Right cardiac atrium (tissue), 5 donors: ENCODE measurements at regions of chr10 and their contacts with region 1.

Region 1: GRCh38 chr10:22356333-22356873 is 11.1 kb downstream of the SPAG6 start:
- DNase-seq: no peak
- ATAC-seq: no peak
- H3K4me3 ChIP-seq: no peak overlapping the region
- H3K27ac ChIP-seq: no peak overlapping the region
- H3K4me1 ChIP-seq: no peaks in the 10 kb centered on the region
- H3K27me3 ChIP-seq: no peaks in the 10 kb centered on the region

Region 2: GRCh38 chr10:22271786-22272185 is 84.6 kb before region 1 on chr10:
- intact Hi-C with region 1: no loop called
- DNase-seq: no peak
- ATAC-seq: no peak
- H3K4me3 ChIP-seq: no peak overlapping the region
- H3K27ac ChIP-seq: no peak overlapping the region
- H3K4me1 ChIP-seq: no peaks in the 10 kb centered on the region
- H3K27me3 ChIP-seq: no peaks in the 10 kb centered on the region

Region 3: GRCh38 chr10:22436884-22437619 is 80.6 kb after region 1 on chr10:
- intact Hi-C with region 1: loop called in 1 of 4 experiments (anchors 10 kb)
- DNase-seq: peak; percentile 94 to 98 (median 97)
- ATAC-seq: peak; percentile 95 to 96
- H3K4me3 ChIP-seq: peak overlapping the region; percentile 81
- H3K27ac ChIP-seq: peak overlapping the region; percentile 96
- H3K4me1 ChIP-seq: peaks cover 3% of the 10 kb centered on the region
- H3K27me3 ChIP-seq: no peaks in the 10 kb centered on the region